ENCODE measurements at regions of chr9 and their contacts with region 1.

Region 1: GRCh38 chr9:89555451-89556375 is 49.1 kb upstream of the GADD45G start:
- DNase-seq: no peak

Region 2: DNA sequence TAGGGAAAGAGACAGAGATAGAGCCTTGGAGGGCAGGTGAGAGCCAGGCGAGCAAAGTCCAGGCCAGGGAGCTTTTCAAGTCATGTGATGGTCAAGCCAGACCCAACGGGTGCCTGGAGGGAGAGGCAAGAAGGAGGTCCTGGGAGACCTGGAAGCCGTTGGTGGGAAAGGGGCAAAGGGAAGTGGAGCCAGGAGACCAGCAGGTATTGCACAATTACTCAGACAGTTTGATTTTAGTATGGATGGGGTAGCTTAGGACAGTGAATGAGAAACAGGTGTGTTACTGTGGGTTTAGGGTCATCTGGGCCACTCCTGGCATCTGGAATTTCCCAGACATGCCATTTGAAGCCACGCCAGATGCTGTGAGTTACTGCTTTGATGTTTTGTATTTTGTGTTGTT is 232.3 kb before region 1 on chr9:
- intact Hi-C with region 1: loop called in 1 of 2 experiments (anchors 10 kb)
- DNase-seq: no peak